GM12878 (cell line): ENCODE measurements at regions of chr10 and their contacts with region 1.

Region 1: DNA sequence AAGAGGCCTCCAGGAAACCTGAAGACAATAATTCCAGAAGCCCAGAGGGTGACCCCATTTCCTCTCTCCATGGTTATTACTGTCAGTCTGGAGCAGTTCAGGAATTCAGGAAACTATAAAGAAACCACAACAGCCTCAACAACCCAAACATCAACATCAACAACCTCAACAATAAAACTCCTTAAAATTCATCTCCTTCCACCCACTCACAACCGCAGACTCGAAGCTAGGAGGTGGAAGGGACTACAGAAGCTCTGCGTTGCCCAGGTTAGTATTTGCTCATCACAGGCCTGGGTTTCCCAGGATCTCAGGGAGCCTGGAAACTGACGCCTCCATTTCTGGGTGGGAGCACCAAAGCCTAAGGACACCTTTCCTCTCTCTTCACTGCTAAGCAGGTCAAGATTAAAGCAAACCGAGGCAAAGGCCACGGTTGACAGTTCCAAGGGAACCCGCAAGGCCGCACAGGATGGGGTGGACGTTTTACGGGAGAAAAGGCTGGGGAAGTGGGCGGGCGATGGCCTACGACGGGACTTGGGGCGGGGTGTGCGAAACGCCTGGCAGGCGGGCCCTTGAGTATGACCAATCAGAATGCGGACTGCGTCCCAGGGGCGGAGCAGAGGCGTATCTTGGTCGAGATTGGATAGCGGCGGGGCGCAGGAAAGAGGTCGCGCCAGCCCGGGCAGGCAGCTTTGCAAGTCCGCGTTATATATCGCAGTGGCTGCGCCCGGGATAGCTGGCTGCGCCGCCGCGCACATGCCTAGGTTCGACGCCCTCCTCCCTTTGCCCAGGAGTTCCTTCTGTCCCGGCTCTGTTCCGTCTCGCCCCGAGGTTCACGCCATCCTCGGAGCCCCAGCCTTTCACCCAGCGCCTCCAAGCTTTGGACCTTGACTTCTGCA is at the start of gene ELOVL3:
- DNase-seq: peak; percentile 53
- ATAC-seq: peak; percentile 86
- H3K4me3 ChIP-seq: peak within 1 kb of the TSS; percentile 54; the same call in 1 of the 2 replicates
- H3K27ac ChIP-seq: no peak within 1 kb of the TSS
- H3K4me1 ChIP-seq: peaks cover 11% of the 10 kb centered on the region
- H3K27me3 ChIP-seq: peaks cover 5 to 7% of the 10 kb centered on the region in 2 experiments
- CTCF ChIP-seq: no peak
- EP300 ChIP-seq: no peak
- POLR2A ChIP-seq: no peak
- RAD21 ChIP-seq: no peak
- polyA plus RNA-seq, gene ELOVL3: not detected

Region 2: GRCh38 chr10:102245101-102245931 is 19.4 kb after region 1 on chr10 and contains the start of gene GBF1:
- CTCF ChIA-PET with region 1: interaction called, 49 read pairs
- POLR2A ChIA-PET with region 1: no interaction called
- RAD21 ChIA-PET with region 1: interaction called, 16 read pairs
- SMC1A ChIA-PET with region 1: interaction called, 6 read pairs
- in situ Hi-C with region 1: no loop called
- intact Hi-C with region 1: no loop called
- DNase-seq: peak; percentile 100
- ATAC-seq: peak; percentile 94
- H3K4me3 ChIP-seq: peak within 1 kb of the TSS; percentile 86
- H3K27ac ChIP-seq: peak within 1 kb of the TSS; percentile 88
- H3K4me1 ChIP-seq: peaks cover 4% of the 10 kb centered on the region; the same call in 1 of the 2 replicates
- H3K27me3 ChIP-seq: peaks cover 3 to 9% of the 10 kb centered on the region in 2 experiments
- CTCF ChIP-seq: no peak
- EP300 ChIP-seq: 0 out of 4 replicates have a peak, but pooled peaks of 1 of the 2 experiments have one; percentile 13
- POLR2A ChIP-seq: peak; percentile 99
- RAD21 ChIP-seq: no peak
- polyA plus RNA-seq, gene GBF1: 0.82 to 1.2 TPM

Region 3: GRCh38 chr10:102310361-102311024 is 84.6 kb after region 1 on chr10:
- CTCF ChIA-PET with region 1: interaction called, 18 read pairs
- POLR2A ChIA-PET with region 1: interaction called, 5 read pairs
- RAD21 ChIA-PET with region 1: interaction called, 4 read pairs
- SMC1A ChIA-PET with region 1: interaction called, 7 read pairs
- in situ Hi-C with region 1: no loop called
- intact Hi-C with region 1: no loop called
- DNase-seq: no peak
- ATAC-seq: no peak
- H3K4me3 ChIP-seq: no peak overlapping the region
- H3K27ac ChIP-seq: no peak overlapping the region
- H3K4me1 ChIP-seq: no peaks in the 10 kb centered on the region
- H3K27me3 ChIP-seq: no peaks in the 10 kb centered on the region
- CTCF ChIP-seq: no peak
- EP300 ChIP-seq: no peak
- POLR2A ChIP-seq: no peak
- RAD21 ChIP-seq: no peak

Region 4: DNA sequence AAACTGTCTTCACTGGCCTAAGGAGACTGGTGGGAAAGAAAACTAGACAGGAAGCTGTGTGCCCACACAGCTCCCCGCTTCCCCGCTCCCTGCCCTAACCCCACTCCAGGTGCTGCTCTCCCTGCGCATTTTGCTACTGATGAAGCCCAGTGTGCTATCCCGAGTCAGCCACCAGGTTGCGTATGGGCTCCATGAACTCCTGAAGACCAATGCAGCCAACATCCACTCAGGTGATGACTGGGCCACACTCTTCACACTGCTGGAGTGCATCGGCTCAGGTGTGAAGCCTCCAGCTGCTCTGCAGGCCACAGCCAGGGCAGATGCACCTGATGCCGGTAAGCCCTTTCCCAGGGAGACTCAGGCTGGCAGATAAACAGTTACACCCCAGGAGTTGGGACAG is 149.4 kb after region 1 on chr10:
- CTCF ChIA-PET with region 1: interaction called, 10 read pairs
- POLR2A ChIA-PET with region 1: no interaction called
- RAD21 ChIA-PET with region 1: interaction called, 3 read pairs
- SMC1A ChIA-PET with region 1: no interaction called
- in situ Hi-C with region 1: no loop called
- intact Hi-C with region 1: no loop called
- DNase-seq: no peak
- ATAC-seq: peak; percentile 25; the same call in 2 of the 3 replicates
- H3K4me3 ChIP-seq: no peak overlapping the region
- H3K27ac ChIP-seq: no peak overlapping the region
- H3K4me1 ChIP-seq: no peaks in the 10 kb centered on the region
- H3K27me3 ChIP-seq: no peaks in the 10 kb centered on the region
- CTCF ChIP-seq: peak in 2 of 3 experiments; percentile 5 to 9; a peak in 1 of 6 replicates
- EP300 ChIP-seq: no peak
- POLR2A ChIP-seq: no peak
- RAD21 ChIP-seq: 0 out of 2 replicates have a peak, but pooled peaks have one; percentile 21

Region 5: GRCh38 chr10:102399217-102400089 is 173.6 kb after region 1 on chr10:
- CTCF ChIA-PET with region 1: interaction called, 69 read pairs
- POLR2A ChIA-PET with region 1: no interaction called
- RAD21 ChIA-PET with region 1: interaction called, 33 read pairs
- SMC1A ChIA-PET with region 1: interaction called, 15 read pairs
- in situ Hi-C with region 1: no loop called
- intact Hi-C with region 1: loop called (anchors 2 kb)
- DNase-seq: peak; percentile 56
- ATAC-seq: peak; percentile 66
- H3K4me3 ChIP-seq: peak overlapping the region; percentile 67
- H3K27ac ChIP-seq: peak overlapping the region; percentile 37
- H3K4me1 ChIP-seq: peaks cover 20% of the 10 kb centered on the region
- H3K27me3 ChIP-seq: no peaks in the 10 kb centered on the region
- CTCF ChIP-seq: peak; percentile 88 to 94 (median 88)
- EP300 ChIP-seq: no peak
- POLR2A ChIP-seq: peak; percentile 86
- RAD21 ChIP-seq: peak; percentile 61

Region 6: DNA sequence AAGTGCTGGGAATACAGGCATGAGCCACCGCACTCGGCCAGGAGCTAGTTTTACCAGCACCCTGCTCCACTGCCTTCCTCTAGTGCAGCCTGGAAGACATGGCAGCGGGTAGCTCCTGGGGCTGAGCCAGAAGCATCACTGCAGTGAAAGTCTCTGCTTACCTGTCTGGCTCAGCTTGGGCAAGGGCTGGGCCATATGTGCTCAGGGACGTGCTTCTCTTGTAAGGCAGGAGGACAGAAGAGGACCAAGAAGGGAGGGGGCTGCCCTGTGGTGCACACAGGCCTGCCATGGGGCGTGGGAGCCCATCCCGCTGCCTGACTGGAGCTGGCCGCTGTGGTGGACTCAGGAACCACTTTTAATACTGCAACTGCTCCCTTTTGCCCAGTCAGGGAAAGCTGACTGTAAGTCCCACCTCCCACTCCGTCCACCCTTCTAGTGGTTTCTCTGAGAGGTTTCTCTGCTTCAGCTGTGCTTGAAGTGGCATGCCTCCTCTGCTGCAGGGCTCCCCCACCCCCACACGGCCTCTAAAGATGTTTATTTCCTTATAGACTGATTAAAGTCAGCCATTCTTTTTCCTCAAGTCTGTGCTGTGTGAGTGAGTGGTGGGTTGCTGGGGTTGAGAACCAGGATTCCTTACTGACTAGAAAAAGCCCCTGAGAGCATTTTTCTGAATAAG is 250.7 kb after region 1 on chr10:
- CTCF ChIA-PET with region 1: interaction called, 42 read pairs
- POLR2A ChIA-PET with region 1: no interaction called
- RAD21 ChIA-PET with region 1: interaction called, 19 read pairs
- SMC1A ChIA-PET with region 1: interaction called, 22 read pairs
- in situ Hi-C with region 1: no loop called
- intact Hi-C with region 1: loop called (anchors 5 kb)
- DNase-seq: no peak
- ATAC-seq: no peak
- H3K4me3 ChIP-seq: no peak overlapping the region
- H3K27ac ChIP-seq: no peak overlapping the region
- H3K4me1 ChIP-seq: no peaks in the 10 kb centered on the region
- H3K27me3 ChIP-seq: no peaks in the 10 kb centered on the region
- CTCF ChIP-seq: no peak
- EP300 ChIP-seq: no peak
- POLR2A ChIP-seq: no peak
- RAD21 ChIP-seq: no peak

Region 7: DNA sequence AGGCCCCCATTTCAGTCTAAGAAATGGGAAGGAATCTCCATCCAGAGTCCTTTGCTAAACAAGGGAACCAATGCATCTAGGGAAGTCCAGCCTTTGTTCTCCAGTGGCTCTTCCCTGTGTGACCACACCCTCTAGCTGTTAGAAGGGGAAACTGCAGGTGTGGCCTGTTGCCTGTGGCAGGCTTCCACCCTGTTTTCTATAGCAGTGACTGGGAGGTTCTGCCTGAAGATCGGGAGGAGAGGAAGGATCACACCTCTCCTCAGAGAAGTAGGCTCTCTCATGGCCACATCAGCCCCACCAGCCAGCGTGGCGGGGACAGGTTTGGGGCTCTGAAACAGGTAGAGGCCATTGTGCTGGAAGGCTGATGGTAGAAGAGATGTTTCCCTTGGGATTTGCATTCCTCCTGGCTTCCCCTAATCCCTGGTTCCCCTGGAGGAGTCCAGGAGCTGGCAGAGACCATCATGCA is 370.6 kb after region 1 on chr10:
- CTCF ChIA-PET with region 1: interaction called, 10 read pairs
- POLR2A ChIA-PET with region 1: no interaction called
- RAD21 ChIA-PET with region 1: interaction called, 4 read pairs
- SMC1A ChIA-PET with region 1: no interaction called
- in situ Hi-C with region 1: no loop called
- intact Hi-C with region 1: no loop called
- DNase-seq: no peak
- ATAC-seq: peak; percentile 91
- H3K4me3 ChIP-seq: no peak overlapping the region
- H3K27ac ChIP-seq: no peak overlapping the region
- H3K4me1 ChIP-seq: no peaks in the 10 kb centered on the region
- H3K27me3 ChIP-seq: no peaks in the 10 kb centered on the region
- CTCF ChIP-seq: peak; percentile 89 to 92 (median 89); a peak in 5 of 6 replicates
- EP300 ChIP-seq: no peak
- POLR2A ChIP-seq: no peak
- RAD21 ChIP-seq: peak; percentile 72

Region 8: DNA sequence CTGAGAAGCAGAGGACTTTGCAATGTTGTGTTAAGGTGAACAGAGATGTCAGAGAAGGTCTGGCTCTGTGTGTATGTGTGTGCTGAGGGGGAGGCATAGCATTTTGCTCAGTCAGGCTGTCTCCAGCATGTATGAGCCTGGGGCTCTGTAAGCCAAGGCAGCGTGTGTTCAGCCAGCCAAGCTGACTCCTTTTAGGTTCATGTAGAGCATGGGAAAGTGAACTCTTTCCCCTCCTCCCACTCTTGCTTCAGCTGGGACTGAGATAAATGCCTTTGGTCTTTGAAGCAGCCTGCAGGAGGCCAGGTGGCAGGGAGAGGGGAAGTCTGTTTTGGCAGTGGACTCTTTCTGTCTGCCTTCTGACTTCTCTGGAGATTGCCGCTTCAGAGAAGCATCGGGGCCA is 492.3 kb after region 1 on chr10:
- CTCF ChIA-PET with region 1: no interaction called
- POLR2A ChIA-PET with region 1: no interaction called
- RAD21 ChIA-PET with region 1: no interaction called
- SMC1A ChIA-PET with region 1: no interaction called
- in situ Hi-C with region 1: no loop called
- intact Hi-C with region 1: no loop called
- DNase-seq: no peak
- ATAC-seq: no peak
- H3K4me3 ChIP-seq: no peak overlapping the region
- H3K27ac ChIP-seq: no peak overlapping the region
- H3K4me1 ChIP-seq: peaks cover 9% of the 10 kb centered on the region; the same call in 1 of the 2 replicates
- H3K27me3 ChIP-seq: no peaks in the 10 kb centered on the region
- CTCF ChIP-seq: no peak
- EP300 ChIP-seq: no peak
- POLR2A ChIP-seq: no peak
- RAD21 ChIP-seq: no peak